ENCODE measurements at regions of chr6 and their contacts with region 1.

Region 1: DNA sequence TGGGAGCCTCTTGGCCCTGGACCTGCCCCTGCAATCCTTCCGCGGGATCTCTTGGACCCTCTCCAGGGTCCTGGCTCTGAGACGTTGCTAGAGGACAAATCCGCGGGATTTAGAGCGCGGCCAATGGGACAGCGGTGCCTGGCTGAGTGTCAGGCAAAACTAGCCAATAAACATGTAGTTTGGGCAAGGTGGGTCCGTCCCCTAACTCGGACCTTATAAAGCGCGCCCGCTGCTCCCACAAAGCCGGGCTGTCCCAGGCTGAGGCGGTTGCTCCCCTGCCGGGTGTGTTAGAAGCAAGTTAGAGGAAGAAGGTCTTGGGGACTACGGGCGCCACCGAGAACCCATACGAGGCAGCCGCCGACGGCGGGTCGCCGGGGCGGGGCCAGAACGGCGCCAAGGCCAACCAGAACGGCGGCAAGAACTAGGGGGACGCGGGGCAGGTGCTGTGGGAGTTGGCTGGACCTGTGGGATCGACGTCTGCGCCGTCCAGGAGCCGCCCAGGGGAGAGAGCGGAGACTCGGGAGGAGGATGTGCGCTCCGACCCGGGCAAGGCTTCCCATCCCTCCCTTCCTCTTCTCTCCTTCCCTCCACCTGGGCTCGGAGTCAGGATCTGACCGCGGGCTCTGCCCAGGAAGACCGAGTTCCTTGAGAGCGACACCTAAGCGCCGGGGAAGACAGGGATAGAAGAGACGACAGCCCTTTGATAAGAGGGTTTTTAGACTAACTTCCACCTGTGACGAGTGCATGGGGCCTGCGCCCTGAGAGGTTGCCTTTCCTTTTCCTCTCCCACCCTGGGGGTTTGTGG is 6.5 kb upstream of the TMEM14A start:
- DNase-seq: peak; percentile 80 to 90 (median 87)
- H3K4me3 ChIP-seq: peak overlapping the region; percentile 77
- H3K27ac ChIP-seq: no peak overlapping the region
- H3K4me1 ChIP-seq: no peaks in the 10 kb centered on the region
- H3K27me3 ChIP-seq: no peaks in the 10 kb centered on the region
- CTCF ChIP-seq: no peak
- EP300 ChIP-seq: no peak
- POLR2A ChIP-seq: peak; percentile 34

Region 2: DNA sequence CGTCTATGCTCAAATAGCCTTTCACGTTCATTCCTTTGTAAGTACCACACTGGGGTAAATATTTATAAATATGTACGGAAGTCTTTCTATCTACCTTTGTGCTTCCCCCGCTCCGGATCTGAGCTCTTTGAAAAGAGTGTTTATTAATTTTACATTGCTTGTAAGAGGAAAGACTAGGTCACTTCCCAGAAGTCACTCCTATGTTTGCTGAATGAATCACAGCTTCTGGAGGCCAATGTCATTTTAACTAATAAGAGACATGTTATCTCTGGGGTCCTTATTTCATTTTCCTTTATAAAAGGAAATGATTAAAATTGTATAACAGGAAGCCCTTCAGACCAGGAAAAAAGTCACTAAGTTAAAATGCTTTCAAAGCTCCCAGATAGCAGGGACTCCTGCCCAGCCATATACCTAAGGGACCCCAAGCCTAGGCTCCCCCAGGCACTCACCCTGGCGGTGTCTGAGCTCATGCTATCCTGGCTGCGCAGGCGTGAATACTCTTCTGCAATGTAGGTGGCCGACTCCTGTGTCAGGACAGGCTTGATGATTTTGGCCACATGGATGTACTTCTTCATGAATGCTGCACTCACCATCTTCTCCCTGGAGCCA is 392.4 kb before region 1 on chr6:
- intact Hi-C with region 1: loop called in 1 of 4 experiments (anchors 10 kb)
- DNase-seq: no peak
- H3K4me3 ChIP-seq: no peak overlapping the region
- H3K27ac ChIP-seq: no peak overlapping the region
- H3K4me1 ChIP-seq: no peaks in the 10 kb centered on the region
- H3K27me3 ChIP-seq: no peaks in the 10 kb centered on the region
- CTCF ChIP-seq: no peak
- EP300 ChIP-seq: no peak
- POLR2A ChIP-seq: no peak

Region 3: DNA sequence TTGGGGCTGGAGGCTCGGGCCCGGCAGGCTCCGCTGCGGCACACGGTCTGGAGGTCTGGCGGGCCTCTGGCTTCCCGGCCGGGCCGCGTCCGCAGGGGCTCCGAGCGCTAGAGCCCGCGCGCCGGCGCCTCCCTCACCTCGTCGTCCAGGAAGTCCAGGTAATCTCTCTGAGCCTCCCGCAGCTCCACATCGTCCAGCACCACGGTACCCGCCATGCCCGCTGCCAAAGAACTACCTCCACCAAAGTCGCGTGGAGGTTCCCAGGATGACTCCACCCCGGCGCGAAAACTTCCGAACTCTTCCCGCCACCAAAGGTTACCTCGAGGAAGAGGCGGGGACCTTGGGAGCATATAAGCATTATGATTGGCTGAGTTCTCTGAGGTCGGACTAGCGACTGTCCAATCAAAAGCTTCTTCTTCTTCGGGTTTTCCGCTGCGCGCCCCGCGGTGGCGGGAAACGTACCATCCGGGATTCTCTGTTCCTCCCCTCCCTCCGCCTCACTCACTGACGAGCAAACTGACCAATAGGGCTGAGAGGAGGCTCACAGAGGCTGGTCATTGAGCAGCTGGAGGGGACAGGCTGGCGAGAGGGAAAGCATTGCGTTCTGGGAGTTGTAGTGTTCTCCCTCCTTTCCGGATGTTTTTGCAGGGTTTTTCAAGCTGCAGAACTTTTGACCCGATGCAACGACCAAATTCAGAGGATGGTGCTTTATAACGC is 379.8 kb before region 1 on chr6 and contains the start of gene MCM3:
- intact Hi-C with region 1: loop called in 2 of 4 experiments (anchors 5 to 10 kb)
- DNase-seq: peak; percentile 94 to 98 (median 96)
- H3K4me3 ChIP-seq: peak within 1 kb of the TSS; percentile 80
- H3K27ac ChIP-seq: peak within 1 kb of the TSS in 1 of 2 donors; percentile 39
- H3K4me1 ChIP-seq: no peaks in the 10 kb centered on the region
- H3K27me3 ChIP-seq: no peaks in the 10 kb centered on the region
- CTCF ChIP-seq: peak in 2 of 3 donors; percentile 10 to 16
- EP300 ChIP-seq: no peak
- POLR2A ChIP-seq: no peak
- total RNA-seq, gene MCM3: 25.5 to 41.8 (median 37.1) TPM

Region 4: DNA sequence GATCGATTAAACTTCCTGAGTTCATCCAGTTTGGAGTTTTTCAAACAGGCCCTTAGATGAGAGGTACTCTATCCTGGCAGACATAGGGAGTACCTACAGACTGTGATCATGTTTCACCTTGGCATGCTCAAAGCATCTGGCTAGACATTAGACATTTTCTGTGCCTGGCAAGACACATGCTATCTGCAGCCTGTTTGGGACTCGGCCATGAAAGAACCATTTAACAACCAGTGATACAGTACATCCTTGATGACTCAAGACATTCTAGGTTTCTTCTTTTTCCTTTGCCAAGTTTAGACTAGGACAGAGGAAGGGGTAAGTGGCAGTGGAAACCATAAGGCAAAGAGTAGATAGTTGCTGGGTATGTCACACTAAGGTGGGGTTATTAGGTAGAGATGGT is 317.9 kb before region 1 on chr6:
- intact Hi-C with region 1: no loop called
- DNase-seq: no peak
- H3K4me3 ChIP-seq: no peak overlapping the region
- H3K27ac ChIP-seq: no peak overlapping the region
- H3K4me1 ChIP-seq: no peaks in the 10 kb centered on the region
- H3K27me3 ChIP-seq: no peaks in the 10 kb centered on the region
- CTCF ChIP-seq: no peak
- EP300 ChIP-seq: no peak
- POLR2A ChIP-seq: no peak

Region 5: GRCh38 chr6:52497652-52498408 is 166.6 kb before region 1 on chr6:
- intact Hi-C with region 1: loop called in 1 of 4 experiments (anchors 10 kb)
- DNase-seq: no peak
- H3K4me3 ChIP-seq: no peak overlapping the region
- H3K27ac ChIP-seq: no peak overlapping the region
- H3K4me1 ChIP-seq: peaks cover 3% of the 10 kb centered on the region
- H3K27me3 ChIP-seq: no peaks in the 10 kb centered on the region
- CTCF ChIP-seq: no peak
- EP300 ChIP-seq: no peak
- POLR2A ChIP-seq: no peak

Region 6: GRCh38 chr6:52598123-52598823 is 66.1 kb before region 1 on chr6:
- intact Hi-C with region 1: loop called in 1 of 4 experiments (anchors 10 kb)
- DNase-seq: peak; percentile 63 to 74 (median 66)
- H3K4me3 ChIP-seq: peak overlapping the region; percentile 5
- H3K27ac ChIP-seq: no peak overlapping the region
- H3K4me1 ChIP-seq: peaks cover 7% of the 10 kb centered on the region
- H3K27me3 ChIP-seq: no peaks in the 10 kb centered on the region
- CTCF ChIP-seq: peak; percentile 63 to 74 (median 66)
- EP300 ChIP-seq: no peak
- POLR2A ChIP-seq: no peak

Region 7: DNA sequence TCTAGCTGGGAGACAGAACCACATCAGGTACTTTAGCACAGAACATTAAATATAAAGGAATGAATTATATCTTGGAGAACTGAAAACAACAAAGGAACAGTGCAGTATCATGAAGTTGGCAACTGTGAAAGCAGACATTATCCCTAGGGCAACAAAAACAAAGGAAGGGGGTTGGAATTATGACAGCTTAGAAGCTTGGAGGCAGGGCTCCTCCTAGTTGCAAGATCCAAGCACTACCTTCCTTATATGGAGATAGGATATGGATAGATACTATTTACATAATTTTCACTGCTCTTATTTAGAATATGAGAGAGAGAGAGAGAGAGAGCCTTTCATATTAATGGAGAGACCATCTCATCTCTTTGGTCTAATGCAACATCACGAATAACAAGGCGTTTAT is 33.5 kb after region 1 on chr6:
- intact Hi-C with region 1: no loop called
- DNase-seq: no peak
- H3K4me3 ChIP-seq: no peak overlapping the region
- H3K27ac ChIP-seq: no peak overlapping the region
- H3K4me1 ChIP-seq: no peaks in the 10 kb centered on the region
- H3K27me3 ChIP-seq: no peaks in the 10 kb centered on the region
- CTCF ChIP-seq: no peak
- EP300 ChIP-seq: no peak
- POLR2A ChIP-seq: no peak

Measured in ovary (tissue), 10 donors.